Activated B cell treated with CpG ODN at 0.5 μM for 24 hours (primary cell): ENCODE measurements at regions of chrX and their contacts with region 1.

Region 1: DNA sequence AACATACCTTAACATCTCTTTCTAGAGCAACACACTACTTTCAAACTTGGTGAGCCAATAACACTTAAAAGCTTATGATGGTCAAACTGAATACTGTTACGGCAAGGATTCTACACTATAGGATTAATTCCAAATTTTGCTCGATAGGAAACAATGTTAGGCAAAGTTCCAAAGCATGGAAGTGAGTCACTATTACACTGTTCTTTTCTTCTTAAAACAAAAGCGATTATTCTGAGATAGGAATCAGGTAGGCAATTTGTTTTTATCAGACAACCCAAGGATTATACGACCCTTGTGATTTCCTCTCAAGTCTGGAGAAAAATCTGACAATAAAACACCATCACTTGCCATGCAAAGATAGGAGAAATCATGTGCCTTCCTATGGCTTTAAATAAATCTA is 81.5 kb downstream of the HUWE1 start:
- DNase-seq: no peak
- ATAC-seq: no peak
- H3K4me3 Mint-ChIP-seq: no peak overlapping the region
- H3K27ac Mint-ChIP-seq: no peak overlapping the region
- H3K4me1 Mint-ChIP-seq: no peaks in the 10 kb centered on the region
- H3K27me3 Mint-ChIP-seq: no peaks in the 10 kb centered on the region
- CTCF ChIP-seq: no peak

Region 2: GRCh38 chrX:53571494-53571893 is 33.5 kb before region 1 on chrX:
- CTCF ChIA-PET with region 1: no interaction called
- POLR2A ChIA-PET with region 1: no interaction called
- intact Hi-C with region 1: loop called (anchors 5 kb)
- DNase-seq: no peak
- ATAC-seq: no peak
- H3K4me3 Mint-ChIP-seq: no peak overlapping the region
- H3K27ac Mint-ChIP-seq: no peak overlapping the region
- H3K4me1 Mint-ChIP-seq: no peaks in the 10 kb centered on the region
- H3K27me3 Mint-ChIP-seq: no peaks in the 10 kb centered on the region
- CTCF ChIP-seq: no peak

Region 3: DNA sequence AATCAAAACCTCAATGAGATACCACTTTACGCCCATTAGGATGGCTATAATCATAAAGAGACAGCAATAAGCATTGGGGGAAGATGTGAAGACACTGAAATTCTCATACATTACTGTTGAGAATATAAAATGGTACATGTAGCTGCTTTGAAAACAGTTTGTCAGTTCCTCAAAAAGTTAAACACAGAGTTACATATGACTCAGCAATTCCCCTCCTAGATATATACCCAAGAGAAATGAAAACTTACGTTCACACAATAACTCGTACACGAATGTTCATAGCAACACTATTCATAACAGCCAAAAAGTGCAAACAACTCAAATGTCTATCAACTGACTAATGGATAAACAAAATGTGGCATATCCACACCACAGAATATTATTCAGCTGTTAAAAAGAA is 402.7 kb after region 1 on chrX:
- CTCF ChIA-PET with region 1: no interaction called
- POLR2A ChIA-PET with region 1: no interaction called
- intact Hi-C with region 1: no loop called
- DNase-seq: no peak
- ATAC-seq: no peak
- H3K4me3 Mint-ChIP-seq: no peak overlapping the region
- H3K27ac Mint-ChIP-seq: no peak overlapping the region
- H3K4me1 Mint-ChIP-seq: no peaks in the 10 kb centered on the region
- H3K27me3 Mint-ChIP-seq: no peaks in the 10 kb centered on the region
- CTCF ChIP-seq: no peak